ENCODE measurements at regions of chr7 and their contacts with region 1.

Region 1: DNA sequence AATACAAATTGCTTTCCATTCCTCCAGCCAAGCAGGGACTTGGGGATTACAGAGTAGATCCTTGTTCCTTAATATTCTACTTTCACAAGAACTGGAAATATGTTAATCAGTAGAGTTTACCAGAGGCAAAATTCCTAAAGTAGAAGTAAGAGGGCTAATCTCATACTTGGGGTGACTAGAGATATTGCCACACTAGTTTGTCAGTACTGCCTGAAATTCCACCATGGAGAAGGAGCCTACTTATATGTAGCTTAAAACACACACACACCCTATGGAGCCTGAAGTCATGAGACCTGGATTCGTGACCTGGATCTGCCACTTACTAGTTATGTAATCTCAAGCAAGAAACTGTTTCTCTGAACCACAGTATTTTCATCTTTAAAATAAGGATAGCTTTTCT is 33.9 kb downstream of the STRIP2 start:
- DNase-seq: no peak
- H3K4me3 Mint-ChIP-seq: no peak overlapping the region
- H3K27ac Mint-ChIP-seq: no peak overlapping the region
- H3K4me1 Mint-ChIP-seq: no peaks in the 10 kb centered on the region
- H3K27me3 Mint-ChIP-seq: no peaks in the 10 kb centered on the region
- CTCF ChIP-seq: no peak

Region 2: GRCh38 chr7:129163875-129164544 is 304.1 kb before region 1 on chr7:
- CTCF ChIA-PET with region 1: interaction called, 13 read pairs
- POLR2A ChIA-PET with region 1: interaction called, 3 read pairs
- intact Hi-C with region 1: no loop called
- DNase-seq: peak; percentile 44
- H3K4me3 Mint-ChIP-seq: no peak overlapping the region
- H3K27ac Mint-ChIP-seq: no peak overlapping the region
- H3K4me1 Mint-ChIP-seq: no peaks in the 10 kb centered on the region
- H3K27me3 Mint-ChIP-seq: no peaks in the 10 kb centered on the region
- CTCF ChIP-seq: peak; percentile 62

Region 3: GRCh38 chr7:129343099-129343700 is 124.9 kb before region 1 on chr7:
- CTCF ChIA-PET with region 1: interaction called, 12 read pairs
- POLR2A ChIA-PET with region 1: no interaction called
- intact Hi-C with region 1: loop called (anchors 1 kb)
- DNase-seq: peak; percentile 53
- H3K4me3 Mint-ChIP-seq: no peak overlapping the region
- H3K27ac Mint-ChIP-seq: no peak overlapping the region
- H3K4me1 Mint-ChIP-seq: peaks cover 7% of the 10 kb centered on the region
- H3K27me3 Mint-ChIP-seq: no peaks in the 10 kb centered on the region
- CTCF ChIP-seq: peak; percentile 56

Region 4: GRCh38 chr7:129367700-129368388 is 100.2 kb before region 1 on chr7:
- CTCF ChIA-PET with region 1: interaction called, 179 read pairs
- POLR2A ChIA-PET with region 1: interaction called, 6 read pairs
- intact Hi-C with region 1: loop called (anchors 1 kb)
- DNase-seq: peak; percentile 73
- H3K4me3 Mint-ChIP-seq: no peak overlapping the region
- H3K27ac Mint-ChIP-seq: no peak overlapping the region
- H3K4me1 Mint-ChIP-seq: no peaks in the 10 kb centered on the region
- H3K27me3 Mint-ChIP-seq: no peaks in the 10 kb centered on the region
- CTCF ChIP-seq: peak; percentile 86

Region 5: GRCh38 chr7:129401967-129402860 is 65.9 kb before region 1 on chr7:
- CTCF ChIA-PET with region 1: interaction called, 5 read pairs
- POLR2A ChIA-PET with region 1: no interaction called
- intact Hi-C with region 1: loop called (anchors 1 kb)
- DNase-seq: peak; percentile 30
- H3K4me3 Mint-ChIP-seq: no peak overlapping the region
- H3K27ac Mint-ChIP-seq: no peak overlapping the region
- H3K4me1 Mint-ChIP-seq: peaks cover 9% of the 10 kb centered on the region
- H3K27me3 Mint-ChIP-seq: no peaks in the 10 kb centered on the region
- CTCF ChIP-seq: peak; percentile 26

Region 6: DNA sequence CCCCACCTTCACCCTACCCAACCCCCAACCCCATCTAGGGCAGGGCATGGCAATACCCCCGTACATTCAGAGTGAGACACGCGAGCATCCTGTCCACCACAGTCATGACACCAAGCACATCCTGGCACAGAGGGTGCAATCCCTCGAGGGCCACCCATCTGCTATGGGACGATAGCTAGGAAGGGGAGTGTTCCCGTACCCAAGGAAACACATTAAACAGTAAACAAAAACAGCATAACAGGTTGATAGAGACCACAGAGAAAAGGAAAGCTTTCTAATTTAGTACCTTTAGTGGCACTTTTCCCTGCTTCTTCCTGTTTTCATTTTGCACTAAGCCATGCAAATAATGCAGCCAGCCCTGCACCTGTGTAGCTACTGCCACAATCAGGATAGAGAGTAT is 31.9 kb after region 1 on chr7:
- CTCF ChIA-PET with region 1: no interaction called
- POLR2A ChIA-PET with region 1: no interaction called
- intact Hi-C with region 1: no loop called
- DNase-seq: no peak
- H3K4me3 Mint-ChIP-seq: no peak overlapping the region
- H3K27ac Mint-ChIP-seq: no peak overlapping the region
- H3K4me1 Mint-ChIP-seq: peaks cover 6% of the 10 kb centered on the region
- H3K27me3 Mint-ChIP-seq: no peaks in the 10 kb centered on the region
- CTCF ChIP-seq: no peak

Region 7: GRCh38 chr7:129644634-129645230 is 176.6 kb after region 1 on chr7:
- CTCF ChIA-PET with region 1: interaction called, 9 read pairs
- POLR2A ChIA-PET with region 1: no interaction called
- intact Hi-C with region 1: loop called (anchors 2 kb)
- DNase-seq: peak; percentile 62
- H3K4me3 Mint-ChIP-seq: no peak overlapping the region
- H3K27ac Mint-ChIP-seq: no peak overlapping the region
- H3K4me1 Mint-ChIP-seq: peaks cover 15% of the 10 kb centered on the region
- H3K27me3 Mint-ChIP-seq: no peaks in the 10 kb centered on the region
- CTCF ChIP-seq: peak; percentile 41

Region 8: DNA sequence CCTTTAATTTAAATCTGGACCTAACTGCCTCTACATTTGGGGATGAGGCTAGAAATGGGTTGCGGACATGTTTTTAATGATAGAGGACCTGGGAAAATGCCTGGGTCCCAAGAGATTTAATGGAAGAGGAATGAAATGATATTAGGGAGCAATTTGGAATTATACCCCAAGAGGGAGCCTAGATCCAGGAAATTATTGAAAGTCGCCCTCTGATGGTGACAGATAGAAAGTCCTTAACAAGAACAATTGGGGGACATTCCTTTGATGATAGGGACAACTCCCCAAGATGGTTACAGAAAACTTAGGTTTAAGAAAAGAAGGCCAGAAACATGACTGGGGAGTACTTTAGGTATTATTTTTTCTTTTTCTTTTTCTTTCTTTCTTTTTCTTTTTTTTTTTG is 1227.8 kb after region 1 on chr7:
- CTCF ChIA-PET with region 1: no interaction called
- POLR2A ChIA-PET with region 1: no interaction called
- intact Hi-C with region 1: no loop called
- DNase-seq: peak; percentile 55
- H3K4me3 Mint-ChIP-seq: no peak overlapping the region
- H3K27ac Mint-ChIP-seq: no peak overlapping the region
- H3K4me1 Mint-ChIP-seq: no peaks in the 10 kb centered on the region
- H3K27me3 Mint-ChIP-seq: no peaks in the 10 kb centered on the region
- CTCF ChIP-seq: peak; percentile 66

Measured in MCF 10A (cell line).